Left lung (tissue), 14 donors: ENCODE measurements at regions of chr7 and their contacts with region 1.

Region 1: DNA sequence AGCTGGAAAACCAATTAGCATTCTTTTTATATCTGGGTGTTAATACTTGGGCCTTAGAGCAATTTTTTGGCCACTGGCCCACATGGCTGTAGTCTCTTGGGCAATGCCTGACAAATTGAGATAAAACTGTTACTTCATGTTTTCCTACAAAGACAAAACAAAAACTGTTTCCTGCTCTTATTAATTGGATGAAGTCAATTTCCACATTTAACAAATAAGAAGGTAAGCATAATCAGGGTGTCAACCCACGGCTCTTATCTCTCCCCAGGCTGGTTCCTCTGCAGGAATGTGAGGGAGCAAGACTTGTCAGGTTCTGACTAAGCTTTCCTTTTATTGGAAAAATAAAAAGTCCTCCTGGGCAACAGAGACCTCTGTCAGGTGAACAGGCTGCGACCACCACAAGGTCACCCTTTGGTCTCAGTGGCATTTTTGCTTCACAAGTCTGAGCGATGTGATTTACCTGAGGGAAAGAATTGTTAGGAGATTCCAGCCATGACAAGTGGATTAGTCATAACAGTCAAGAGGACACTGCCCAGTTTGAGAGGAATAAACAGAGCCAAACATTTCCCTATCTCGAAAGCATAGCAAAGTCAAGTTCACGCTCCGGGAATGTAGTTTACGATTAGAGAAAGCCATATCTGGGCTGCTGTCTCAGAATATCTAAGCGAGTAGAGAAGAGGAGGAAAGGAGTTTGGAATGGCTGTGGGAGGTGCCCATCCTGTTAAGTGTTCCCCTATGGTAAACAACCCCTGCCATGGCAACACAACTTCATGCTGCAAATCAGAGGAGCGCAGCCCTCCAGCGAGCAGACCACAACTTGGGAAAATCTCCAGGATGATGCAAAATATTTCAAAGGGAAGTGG is 144.4 kb downstream of the TES start:
- DNase-seq: peak in 3 of 4 donors; percentile 81 to 95 (median 88)
- ATAC-seq: peak; percentile 91
- H3K4me3 ChIP-seq: no peak overlapping the region
- H3K27ac ChIP-seq: peak overlapping the region; percentile 87 to 92
- H3K4me1 ChIP-seq: peaks cover 36 to 40% of the 10 kb centered on the region in 2 donors
- H3K27me3 ChIP-seq: no peaks in the 10 kb centered on the region
- CTCF ChIP-seq: no peak

Region 2: DNA sequence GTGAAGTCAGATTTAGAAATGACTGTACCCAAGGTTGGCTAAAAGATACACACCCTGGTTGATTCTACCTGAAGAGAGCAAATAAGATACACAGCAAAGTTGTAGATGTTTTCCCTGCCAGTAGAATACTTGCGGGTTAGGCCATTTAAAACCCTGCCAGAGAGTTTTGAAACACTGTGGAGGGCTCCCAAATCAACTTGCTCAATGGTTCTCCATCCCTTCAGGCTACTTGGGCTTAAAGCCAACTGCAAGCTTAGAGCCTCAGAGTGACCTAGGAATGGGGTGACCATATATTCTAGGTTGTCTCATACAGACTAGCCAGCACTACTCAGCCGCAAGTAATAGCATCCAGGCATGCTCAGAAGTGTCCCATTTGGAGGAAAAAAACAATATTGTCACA is 180.0 kb after region 1 on chr7:
- intact Hi-C with region 1: loop called in 1 of 2 experiments (anchors 10 kb)
- DNase-seq: no peak
- ATAC-seq: peak; percentile 45
- H3K4me3 ChIP-seq: no peak overlapping the region
- H3K27ac ChIP-seq: peak overlapping the region in 1 of 2 donors; percentile 13
- H3K4me1 ChIP-seq: peaks cover 8 to 40% of the 10 kb centered on the region in 2 donors
- H3K27me3 ChIP-seq: no peaks in the 10 kb centered on the region
- CTCF ChIP-seq: no peak